Naive thymus-derived CD4-positive, alpha-beta T cell (primary cell): ENCODE measurements at regions of chr16 and their contacts with region 1.

Region 1: GRCh38 chr16:48609652-48610029 is 339 bp downstream of the N4BP1 start:
- DNase-seq: no peak
- ATAC-seq: peak; percentile 39
- H3K4me3 ChIP-seq: peak overlapping the region; percentile 66
- H3K4me3 Mint-ChIP-seq: peak overlapping the region in 4 of 10 donors; percentile 24 to 95 (median 56)
- H3K27ac ChIP-seq: peak overlapping the region; percentile 94
- H3K27ac Mint-ChIP-seq: peak overlapping the region in 8 of 9 donors; percentile 88 to 99 (median 94)
- H3K4me1 ChIP-seq: peaks cover 63 to 76% of the 10 kb centered on the region in 2 donors
- H3K4me1 Mint-ChIP-seq: peaks cover 24 to 50% (median 43%) of the 10 kb centered on the region in 7 donors
- H3K27me3 ChIP-seq: no peaks in the 10 kb centered on the region
- H3K27me3 Mint-ChIP-seq: no peaks in the 10 kb centered on the region

Region 2: GRCh38 chr16:46830902-46831647 is 1778.6 kb before region 1 on chr16 and contains the start of gene C16orf87:
- CTCF ChIA-PET with region 1: no interaction called
- POLR2A ChIA-PET with region 1: no interaction called
- intact Hi-C with region 1: loop called (anchors 1 to 10 kb)
- DNase-seq: peak; percentile 88 to 95 (median 91)
- ATAC-seq: peak; percentile 96
- H3K4me3 ChIP-seq: peak within 1 kb of the TSS; percentile 46
- H3K4me3 Mint-ChIP-seq: peak within 1 kb of the TSS; percentile 94 to 99 (median 96)
- H3K27ac ChIP-seq: peak within 1 kb of the TSS; percentile 81
- H3K27ac Mint-ChIP-seq: peak within 1 kb of the TSS; percentile 90 to 98 (median 95)
- H3K4me1 ChIP-seq: peaks cover 9 to 12% of the 10 kb centered on the region in 2 donors
- H3K4me1 Mint-ChIP-seq: peaks cover 21 to 35% (median 29%) of the 10 kb centered on the region in 7 donors
- H3K27me3 ChIP-seq: no peaks in the 10 kb centered on the region
- H3K27me3 Mint-ChIP-seq: peaks cover 0 to 21% (median 0%) of the 10 kb centered on the region in 5 donors
- total RNA-seq, gene C16orf87: 5.6 to 14.0 (median 12.7) TPM

Region 3: DNA sequence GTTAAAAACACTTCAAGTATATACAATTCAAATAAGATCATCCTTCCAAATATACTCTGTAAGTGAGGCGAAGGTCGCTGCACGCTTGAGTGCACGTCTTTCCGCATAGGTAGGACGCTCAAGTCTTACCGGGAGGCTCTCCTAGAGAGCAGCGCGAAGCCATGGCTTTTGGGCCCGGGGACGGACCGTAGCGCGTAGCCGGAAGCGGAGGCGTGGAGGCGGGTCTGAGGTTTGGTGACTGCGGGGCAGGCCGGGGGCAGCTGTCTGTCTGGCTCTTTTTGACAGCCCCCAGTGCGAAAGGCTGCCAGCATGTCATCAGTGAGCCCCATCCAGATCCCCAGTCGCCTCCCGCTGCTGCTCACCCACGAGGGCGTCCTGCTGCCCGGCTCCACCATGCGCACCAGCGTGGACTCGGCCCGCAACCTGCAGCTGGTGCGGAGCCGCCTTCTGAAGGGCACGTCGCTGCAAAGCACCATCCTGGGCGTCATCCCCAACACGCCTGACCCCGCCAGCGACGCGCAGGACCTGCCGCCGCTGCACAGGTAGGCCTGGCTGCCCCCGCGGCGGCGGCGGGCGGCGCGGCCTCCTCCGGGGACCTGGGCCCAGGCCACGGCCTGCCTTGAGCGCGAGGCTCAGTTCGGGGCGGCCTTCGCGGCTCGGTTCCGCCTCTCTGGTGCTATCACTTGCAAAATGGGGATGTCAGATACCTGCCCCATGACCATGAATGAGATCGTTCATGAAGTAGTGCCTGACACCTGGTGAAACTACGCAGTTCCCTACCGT is 365.4 kb before region 1 on chr16 and contains the start of gene LONP2:
- CTCF ChIA-PET with region 1: no interaction called
- POLR2A ChIA-PET with region 1: interaction called, 3 read pairs
- intact Hi-C with region 1: loop called (anchors 1 to 2 kb)
- DNase-seq: peak; percentile 79 to 97 (median 93)
- ATAC-seq: peak; percentile 99
- H3K4me3 ChIP-seq: peak within 1 kb of the TSS; percentile 78
- H3K4me3 Mint-ChIP-seq: peak within 1 kb of the TSS; percentile 93 to 100 (median 96)
- H3K27ac ChIP-seq: peak within 1 kb of the TSS; percentile 78
- H3K27ac Mint-ChIP-seq: peak within 1 kb of the TSS; percentile 89 to 98 (median 96)
- H3K4me1 ChIP-seq: peaks cover 25 to 27% of the 10 kb centered on the region in 2 donors
- H3K4me1 Mint-ChIP-seq: peaks cover 29 to 56% (median 45%) of the 10 kb centered on the region in 7 donors
- H3K27me3 ChIP-seq: no peaks in the 10 kb centered on the region
- H3K27me3 Mint-ChIP-seq: no peaks in the 10 kb centered on the region
- total RNA-seq, gene LONP2: 62.3 to 124 (median 83.0) TPM

Region 4: DNA sequence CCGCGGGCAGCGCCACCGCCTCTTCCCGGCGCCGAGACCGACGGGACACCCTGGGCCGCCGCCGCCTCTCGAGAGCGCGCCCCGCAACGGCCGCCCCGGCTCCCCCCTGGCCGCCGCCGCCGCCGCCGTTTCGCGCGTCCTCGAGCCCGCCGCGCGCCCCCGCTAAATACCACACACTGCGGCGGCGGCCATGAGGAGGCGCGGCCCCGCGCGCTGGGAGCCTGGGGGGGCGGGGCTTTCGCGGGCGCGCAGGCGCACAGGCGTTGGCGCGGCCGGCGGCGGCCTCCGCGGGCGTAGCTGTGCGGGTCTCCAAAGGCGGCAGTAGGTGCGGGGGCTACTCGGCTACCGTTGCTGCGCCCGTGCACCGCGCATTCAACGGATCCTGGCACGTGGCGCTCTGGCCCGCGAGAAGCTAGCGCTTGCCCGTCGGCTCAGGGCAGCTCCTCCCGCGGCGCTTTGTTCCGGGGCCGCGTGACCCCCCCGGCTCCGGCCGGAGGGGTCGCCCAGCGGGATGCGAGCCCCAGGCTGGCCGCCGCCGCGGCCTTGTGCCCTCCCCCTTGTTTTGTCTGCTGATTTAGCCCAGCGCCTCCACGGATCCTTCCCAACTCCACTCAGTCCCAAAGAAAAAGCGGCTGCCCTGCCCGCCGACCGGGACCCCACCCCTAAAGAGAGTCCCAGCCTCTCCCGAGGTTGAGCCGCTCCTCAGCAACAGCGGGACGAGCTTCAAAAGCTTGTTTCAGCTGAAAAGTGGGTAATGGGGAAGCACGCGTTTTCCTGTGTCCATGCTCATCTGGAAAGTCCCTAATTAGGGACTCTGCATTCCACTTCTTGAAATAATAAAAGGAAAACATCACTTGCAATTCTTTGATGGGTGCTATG is 224.1 kb before region 1 on chr16 and contains the start of gene SIAH1:
- CTCF ChIA-PET with region 1: interaction called, 5 read pairs
- POLR2A ChIA-PET with region 1: interaction called, 10 read pairs
- intact Hi-C with region 1: loop called (anchors 1 kb)
- DNase-seq: peak; percentile 79 to 95 (median 89)
- ATAC-seq: peak; percentile 95
- H3K4me3 ChIP-seq: peak within 1 kb of the TSS; percentile 88
- H3K4me3 Mint-ChIP-seq: peak within 1 kb of the TSS; percentile 90 to 98 (median 94)
- H3K27ac ChIP-seq: peak within 1 kb of the TSS; percentile 94
- H3K27ac Mint-ChIP-seq: peak within 1 kb of the TSS; percentile 80 to 97 (median 94)
- H3K4me1 ChIP-seq: peaks cover 12 to 16% of the 10 kb centered on the region in 2 donors
- H3K4me1 Mint-ChIP-seq: peaks cover 18 to 39% (median 31%) of the 10 kb centered on the region in 7 donors
- H3K27me3 ChIP-seq: no peaks in the 10 kb centered on the region
- H3K27me3 Mint-ChIP-seq: peaks cover 0 to 5% (median 0%) of the 10 kb centered on the region in 5 donors
- total RNA-seq, gene SIAH1: 14.5 to 51.1 (median 19.8) TPM

Region 5: DNA sequence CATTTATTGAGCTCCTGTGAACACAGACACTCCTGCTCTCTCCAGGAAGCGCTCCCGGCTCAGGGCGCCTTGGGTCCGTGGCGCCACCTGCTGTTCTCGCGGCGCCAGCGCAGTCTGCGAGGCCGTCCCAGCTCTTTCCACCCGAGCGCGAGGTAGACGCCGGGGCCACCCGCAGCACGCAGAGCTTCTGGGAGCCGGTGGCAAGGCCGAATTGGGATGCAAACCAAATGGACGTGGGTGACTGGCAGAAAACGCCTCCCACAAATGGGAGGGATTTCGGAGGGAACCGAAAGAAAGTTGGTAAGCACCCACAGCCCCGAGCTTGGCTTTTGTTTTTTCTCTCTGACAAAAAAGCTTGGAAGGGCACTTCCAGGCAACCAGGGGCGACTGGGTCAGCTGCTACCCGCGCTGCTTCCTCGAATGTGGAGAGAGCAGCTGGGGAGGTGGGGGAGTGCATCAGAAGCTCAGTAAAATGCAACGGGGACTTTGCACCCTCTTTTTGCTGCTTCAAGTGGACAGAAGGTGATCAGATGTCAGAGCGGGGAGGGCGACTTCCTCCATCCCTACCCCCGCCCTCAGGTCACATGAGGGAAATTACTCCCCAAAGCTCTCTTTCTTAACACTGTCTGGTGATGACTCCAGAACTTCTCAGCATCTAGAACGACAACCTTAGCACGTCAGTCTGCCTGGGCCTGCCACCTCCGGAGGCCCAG is 13.8 kb after region 1 on chr16:
- CTCF ChIA-PET with region 1: interaction called, 56 read pairs
- POLR2A ChIA-PET with region 1: interaction called, 78 read pairs
- intact Hi-C with region 1: loop called (anchors 1 kb)
- DNase-seq: peak; percentile 70 to 90 (median 82)
- ATAC-seq: peak; percentile 97
- H3K4me3 ChIP-seq: peak overlapping the region; percentile 34
- H3K4me3 Mint-ChIP-seq: peak overlapping the region; percentile 82 to 95 (median 86)
- H3K27ac ChIP-seq: peak overlapping the region; percentile 42
- H3K27ac Mint-ChIP-seq: peak overlapping the region; percentile 59 to 93 (median 79)
- H3K4me1 ChIP-seq: peaks cover 0 to 23% of the 10 kb centered on the region in 2 donors
- H3K4me1 Mint-ChIP-seq: peaks cover 14 to 39% (median 33%) of the 10 kb centered on the region in 7 donors
- H3K27me3 ChIP-seq: no peaks in the 10 kb centered on the region
- H3K27me3 Mint-ChIP-seq: peaks cover 0 to 7% (median 0%) of the 10 kb centered on the region in 5 donors

Region 6: DNA sequence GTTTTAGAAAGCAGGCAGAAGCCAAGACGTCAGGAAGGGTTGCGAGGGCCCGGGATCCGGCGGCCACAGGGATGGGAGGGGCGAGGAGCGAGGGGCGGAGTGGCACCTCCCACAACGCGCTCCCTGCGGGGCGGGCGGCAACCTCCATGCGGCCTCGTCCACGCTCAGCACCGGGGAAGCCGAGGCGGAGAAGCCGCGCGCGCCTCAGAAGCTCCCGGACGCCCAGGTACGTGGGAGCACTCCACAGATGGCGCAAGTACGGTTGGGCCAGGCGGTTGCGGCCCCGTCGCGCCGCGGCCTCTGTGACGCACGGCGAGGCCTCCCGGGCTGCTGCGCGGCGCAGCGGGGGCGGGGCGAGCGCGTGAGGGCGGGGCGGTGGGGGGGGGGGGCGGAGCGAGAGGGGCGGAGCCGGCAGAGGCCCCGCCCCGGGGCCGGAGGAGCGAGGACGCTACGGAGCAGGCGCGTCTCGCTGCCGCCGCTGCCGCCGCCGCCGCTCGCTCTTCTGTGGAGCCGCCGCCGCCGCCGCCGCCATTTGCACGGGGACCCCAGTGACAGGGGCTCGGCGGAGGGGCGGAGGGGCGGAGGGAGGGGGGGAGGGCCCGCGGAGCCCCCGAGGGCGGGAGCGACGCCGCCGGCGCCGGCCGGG is 1543.3 kb after region 1 on chr16 and contains the start of gene TENT4B:
- CTCF ChIA-PET with region 1: no interaction called
- POLR2A ChIA-PET with region 1: no interaction called
- intact Hi-C with region 1: loop called in 1 of 2 experiments (anchors 10 kb)
- DNase-seq: peak; percentile 87 to 97 (median 96)
- ATAC-seq: peak; percentile 88
- H3K4me3 ChIP-seq: peak within 1 kb of the TSS; percentile 87
- H3K4me3 Mint-ChIP-seq: peak within 1 kb of the TSS; percentile 87 to 99 (median 94)
- H3K27ac ChIP-seq: peak within 1 kb of the TSS; percentile 99
- H3K27ac Mint-ChIP-seq: peak within 1 kb of the TSS; percentile 93 to 99 (median 97)
- H3K4me1 ChIP-seq: peaks cover 16 to 30% of the 10 kb centered on the region in 2 donors
- H3K4me1 Mint-ChIP-seq: peaks cover 28 to 44% (median 40%) of the 10 kb centered on the region in 7 donors
- H3K27me3 ChIP-seq: no peaks in the 10 kb centered on the region
- H3K27me3 Mint-ChIP-seq: no peaks in the 10 kb centered on the region
- total RNA-seq, gene TENT4B: 18.8 to 25.9 (median 23.8) TPM